ENCODE measurements at regions of chr22 and their contacts with region 1.

Region 1: DNA sequence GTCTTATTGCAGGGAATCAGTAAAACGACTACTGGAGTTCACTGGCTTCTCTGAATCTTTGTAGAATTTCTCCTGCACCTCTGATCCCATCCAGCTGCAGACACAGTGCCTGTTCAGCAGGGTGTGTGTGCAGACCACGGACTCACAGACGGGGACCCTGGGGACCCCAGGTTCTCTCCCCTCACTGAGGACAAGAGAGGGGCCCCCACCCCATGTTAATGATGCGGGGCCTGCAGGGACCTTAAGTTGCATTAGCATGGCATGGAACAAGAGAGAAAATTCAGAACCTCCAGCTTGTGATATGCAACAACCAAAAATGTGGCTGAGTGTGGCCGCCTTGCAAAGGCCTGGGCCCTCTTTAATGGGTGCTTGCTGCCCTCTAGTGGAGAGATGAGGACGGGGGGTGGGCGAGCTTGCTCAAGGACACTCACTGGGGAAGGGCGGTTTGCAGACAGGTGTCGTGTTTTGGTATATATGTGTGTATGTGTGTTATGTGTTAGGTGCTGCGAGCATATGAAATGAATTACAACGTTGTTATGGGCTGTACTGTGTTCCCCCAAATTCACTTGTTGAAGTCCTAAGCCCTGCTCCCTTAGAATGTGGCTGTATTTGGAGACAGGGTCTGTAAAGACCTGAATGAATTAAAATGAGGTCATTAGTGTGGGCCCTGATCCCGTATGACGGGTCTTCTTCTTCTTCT is 84.4 kb upstream of the SEPTIN5 start:
- DNase-seq: peak; percentile 61 to 83
- H3K4me3 ChIP-seq: no peak overlapping the region
- H3K27ac ChIP-seq: no peak overlapping the region
- H3K4me1 ChIP-seq: no peaks in the 10 kb centered on the region
- H3K27me3 ChIP-seq: peaks cover 0 to 18% of the 10 kb centered on the region in 2 donors
- CTCF ChIP-seq: peak; percentile 41 to 88 (median 87)
- POLR2A ChIP-seq: no peak

Region 2: DNA sequence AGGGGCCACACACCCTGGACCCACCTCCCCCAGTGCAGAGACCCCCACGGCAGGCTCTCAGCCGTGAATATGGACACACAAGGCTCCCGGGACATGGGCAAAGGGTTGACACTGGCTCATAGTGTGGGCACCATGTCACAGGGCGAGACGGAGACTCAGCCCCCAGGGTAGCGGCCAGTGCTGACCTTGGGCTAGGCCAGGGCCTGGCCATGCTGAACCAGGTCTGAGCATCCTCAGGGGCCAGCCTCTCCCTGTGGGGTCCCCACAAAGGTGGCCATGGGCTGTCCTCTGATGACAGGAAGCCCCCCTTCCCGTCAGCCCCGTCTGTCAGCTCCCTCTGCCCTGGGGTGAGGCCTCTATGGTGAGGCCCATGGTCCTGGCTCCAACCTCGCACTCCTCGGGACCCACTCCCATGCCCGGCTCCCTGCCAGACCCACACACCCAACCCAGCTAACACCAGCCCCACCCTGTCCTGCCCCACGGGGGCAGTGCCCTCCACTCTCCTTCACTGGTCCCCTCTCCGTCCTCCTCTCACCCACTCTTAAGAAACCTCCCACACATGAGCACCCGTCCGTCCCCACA is 674.8 kb before region 1 on chr22:
- intact Hi-C with region 1: loop called (anchors 10 kb)
- DNase-seq: peak in 1 of 2 donors; percentile 36
- H3K4me3 ChIP-seq: no peak overlapping the region
- H3K27ac ChIP-seq: no peak overlapping the region
- H3K4me1 ChIP-seq: no peaks in the 10 kb centered on the region
- H3K27me3 ChIP-seq: peaks cover 0 to 8% of the 10 kb centered on the region in 2 donors
- CTCF ChIP-seq: no peak
- POLR2A ChIP-seq: no peak

Region 3: DNA sequence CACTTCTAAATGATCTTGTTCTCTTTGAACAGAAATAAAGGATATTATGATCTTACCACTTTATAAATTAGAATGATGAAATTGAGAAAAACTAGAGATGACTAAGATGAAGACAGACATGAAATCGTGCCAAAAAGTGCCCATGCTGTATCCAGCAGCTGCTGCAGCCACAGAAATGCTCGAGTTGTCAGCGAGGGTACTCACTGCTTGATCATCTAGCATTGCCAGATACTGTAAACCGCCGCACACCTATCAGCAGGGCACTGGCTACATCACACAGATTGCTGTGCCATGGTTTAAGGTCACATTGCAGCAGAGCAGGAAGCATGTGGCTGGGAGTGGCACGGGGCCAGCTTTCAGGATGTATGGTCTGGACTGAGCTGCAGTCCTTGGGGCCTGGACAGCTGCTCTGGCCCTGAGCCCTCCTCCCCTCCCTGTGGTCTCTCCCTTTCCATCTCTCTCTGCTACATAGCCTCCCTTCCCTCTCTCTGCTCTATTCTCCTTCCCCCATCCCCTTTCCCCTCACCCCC is 33.5 kb after region 1 on chr22:
- intact Hi-C with region 1: no loop called
- DNase-seq: peak in 1 of 2 donors; percentile 43
- H3K4me3 ChIP-seq: no peak overlapping the region
- H3K27ac ChIP-seq: peak overlapping the region in 1 of 2 donors; percentile 36
- H3K4me1 ChIP-seq: no peaks in the 10 kb centered on the region
- H3K27me3 ChIP-seq: no peaks in the 10 kb centered on the region
- CTCF ChIP-seq: no peak
- POLR2A ChIP-seq: no peak

Region 4: GRCh38 chr22:19717691-19718455 is 88.0 kb after region 1 on chr22:
- intact Hi-C with region 1: no loop called
- DNase-seq: peak; percentile 49 to 72
- H3K4me3 ChIP-seq: peak overlapping the region; percentile 49 to 72 (median 68)
- H3K27ac ChIP-seq: peak overlapping the region; percentile 50 to 70
- H3K4me1 ChIP-seq: peaks cover 9 to 12% of the 10 kb centered on the region in 2 donors
- H3K27me3 ChIP-seq: peaks cover 0 to 2% of the 10 kb centered on the region in 2 donors
- CTCF ChIP-seq: peak; percentile 54 to 95 (median 72)
- POLR2A ChIP-seq: no peak

Region 5: GRCh38 chr22:20027966-20028854 is 398.3 kb after region 1 on chr22:
- intact Hi-C with region 1: no loop called
- DNase-seq: no peak
- H3K4me3 ChIP-seq: no peak overlapping the region
- H3K27ac ChIP-seq: peak overlapping the region in 1 of 2 donors; percentile 10
- H3K4me1 ChIP-seq: peaks cover 0 to 6% of the 10 kb centered on the region in 2 donors
- H3K27me3 ChIP-seq: no peaks in the 10 kb centered on the region
- CTCF ChIP-seq: peak in 1 of 3 donors; percentile 12
- POLR2A ChIP-seq: no peak